ENCODE measurements at regions of chr22 and their contacts with region 1.

Region 1: GRCh38 chr22:42090596-42091454 is at the start of gene NDUFA6:
- DNase-seq: peak; percentile 93
- ATAC-seq: peak; percentile 88
- H3K4me3 Mint-ChIP-seq: peak within 1 kb of the TSS; percentile 97
- H3K27ac Mint-ChIP-seq: peak within 1 kb of the TSS; percentile 98
- H3K4me1 Mint-ChIP-seq: peaks cover 32% of the 10 kb centered on the region
- H3K27me3 Mint-ChIP-seq: no peaks in the 10 kb centered on the region
- CTCF ChIP-seq: peak; percentile 44
- total RNA-seq, gene NDUFA6: 73.6 and 83.2 TPM in 2 replicates

Region 2: GRCh38 chr22:41367039-41367679 is 723.7 kb before region 1 on chr22:
- CTCF ChIA-PET with region 1: no interaction called
- POLR2A ChIA-PET with region 1: no interaction called
- intact Hi-C with region 1: no loop called
- DNase-seq: no peak
- ATAC-seq: no peak
- H3K4me3 Mint-ChIP-seq: no peak overlapping the region
- H3K27ac Mint-ChIP-seq: no peak overlapping the region
- H3K4me1 Mint-ChIP-seq: no peaks in the 10 kb centered on the region
- H3K27me3 Mint-ChIP-seq: peaks cover 8% of the 10 kb centered on the region
- CTCF ChIP-seq: no peak

Region 3: DNA sequence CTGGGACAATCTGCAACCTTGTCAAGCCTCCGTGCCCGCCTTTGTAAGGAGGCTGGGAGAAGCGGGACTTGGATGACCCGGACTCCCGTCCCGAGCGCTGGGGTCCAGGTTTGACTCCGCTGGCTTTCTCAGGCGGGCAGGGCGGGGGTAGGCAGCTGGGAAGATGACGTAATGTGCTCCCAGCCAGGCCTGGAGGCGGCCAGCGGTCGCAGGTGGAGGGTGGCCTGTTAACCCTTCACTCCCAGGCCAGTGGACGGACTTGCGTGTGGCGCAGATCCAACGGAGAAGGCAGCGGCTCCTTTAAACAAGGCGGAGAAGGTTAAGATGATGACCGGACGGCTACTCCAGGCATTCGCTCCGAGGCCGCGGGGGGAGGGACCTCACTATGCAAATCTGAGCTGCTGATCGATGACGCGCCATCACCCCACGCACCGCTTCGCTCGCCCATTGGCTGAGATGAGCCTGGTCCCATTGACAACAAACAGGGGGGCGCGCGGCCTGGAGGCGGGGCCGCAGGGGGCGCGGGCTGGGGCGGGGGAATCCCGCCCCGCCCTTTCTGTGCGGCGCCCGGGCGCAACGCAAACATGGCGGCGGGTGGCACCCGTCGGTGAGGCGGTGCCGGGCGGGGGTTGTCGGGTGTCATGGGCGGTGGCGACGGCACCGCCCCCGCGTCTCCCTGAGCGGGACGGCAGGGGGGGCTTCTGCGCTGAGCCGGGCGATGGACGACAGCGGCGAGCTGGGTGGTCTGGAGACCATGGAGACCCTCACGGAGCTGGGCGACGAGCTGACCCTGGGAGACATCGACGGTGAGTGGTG is 258.1 kb before region 1 on chr22 and contains the start of gene SREBF2:
- CTCF ChIA-PET with region 1: no interaction called
- POLR2A ChIA-PET with region 1: interaction called, 18 read pairs
- intact Hi-C with region 1: loop called (anchors 1 kb)
- DNase-seq: peak; percentile 96
- ATAC-seq: peak; percentile 85
- H3K4me3 Mint-ChIP-seq: peak within 1 kb of the TSS; percentile 98
- H3K27ac Mint-ChIP-seq: peak within 1 kb of the TSS; percentile 99
- H3K4me1 Mint-ChIP-seq: peaks cover 62% of the 10 kb centered on the region
- H3K27me3 Mint-ChIP-seq: no peaks in the 10 kb centered on the region
- CTCF ChIP-seq: no peak
- total RNA-seq, gene SREBF2: 253 and 307 TPM in 2 replicates

Region 4: DNA sequence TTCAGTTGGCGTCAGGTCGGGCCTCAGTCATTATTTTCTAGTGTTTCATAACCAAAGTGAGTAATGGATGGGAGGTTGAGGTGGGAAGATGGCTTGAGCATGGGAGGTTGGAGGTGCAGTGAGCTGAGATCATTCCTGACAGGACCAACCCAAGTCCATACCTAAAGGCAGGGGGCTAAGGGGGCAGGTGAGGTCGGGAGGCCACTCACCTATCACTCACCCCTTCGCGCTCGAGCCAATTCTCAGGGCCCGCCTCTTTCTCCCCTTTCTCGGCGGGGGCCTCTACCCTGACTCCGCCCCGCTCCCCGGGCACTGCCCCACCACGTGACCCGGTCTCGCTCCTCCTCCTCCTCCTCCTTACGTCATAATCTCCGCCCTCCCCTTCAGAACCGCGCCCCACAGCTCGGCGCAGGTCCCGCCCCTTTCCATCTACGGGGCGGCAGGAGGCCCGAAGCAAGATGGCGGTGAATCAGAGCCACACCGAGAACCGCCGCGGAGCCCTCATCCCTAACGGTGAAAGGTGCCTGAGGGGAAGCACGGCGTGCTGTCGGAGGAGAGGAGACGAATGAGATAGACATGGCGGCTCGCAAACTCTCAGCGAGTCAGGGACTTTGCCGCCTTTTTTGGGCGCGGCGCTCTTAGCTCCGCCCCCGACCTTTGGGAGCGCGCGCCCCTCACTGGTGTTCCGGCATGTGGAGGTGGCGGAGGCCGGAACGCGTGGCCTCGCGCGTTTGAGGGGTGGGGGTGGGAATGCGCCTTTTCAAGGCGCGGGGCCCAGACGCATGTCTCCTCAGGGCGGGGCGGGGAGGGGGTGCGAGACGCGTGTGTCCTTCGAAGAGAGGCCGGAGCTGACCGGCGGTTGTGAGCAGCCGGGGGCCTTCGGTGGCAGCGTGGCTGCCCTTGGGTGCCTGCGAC is 92.2 kb before region 1 on chr22 and contains the start of gene WBP2NL:
- CTCF ChIA-PET with region 1: no interaction called
- POLR2A ChIA-PET with region 1: interaction called, 38 read pairs
- intact Hi-C with region 1: no loop called
- DNase-seq: peak; percentile 83
- ATAC-seq: peak; percentile 96
- H3K4me3 Mint-ChIP-seq: peak within 1 kb of the TSS; percentile 98
- H3K27ac Mint-ChIP-seq: peak within 1 kb of the TSS; percentile 98
- H3K4me1 Mint-ChIP-seq: peaks cover 22% of the 10 kb centered on the region
- H3K27me3 Mint-ChIP-seq: no peaks in the 10 kb centered on the region
- CTCF ChIP-seq: no peak
- total RNA-seq, gene WBP2NL: 6.8 and 7.8 TPM in 2 replicates

Region 5: GRCh38 chr22:42114721-42115120 is 23.9 kb after region 1 on chr22:
- CTCF ChIA-PET with region 1: interaction called, 18 read pairs
- POLR2A ChIA-PET with region 1: no interaction called
- intact Hi-C with region 1: no loop called
- DNase-seq: no peak
- ATAC-seq: no peak
- H3K4me3 Mint-ChIP-seq: no peak overlapping the region
- H3K27ac Mint-ChIP-seq: no peak overlapping the region
- H3K4me1 Mint-ChIP-seq: peaks cover 3% of the 10 kb centered on the region
- H3K27me3 Mint-ChIP-seq: no peaks in the 10 kb centered on the region
- CTCF ChIP-seq: no peak

Region 6: GRCh38 chr22:42437488-42438292 is 346.9 kb after region 1 on chr22:
- CTCF ChIA-PET with region 1: interaction called, 36 read pairs
- POLR2A ChIA-PET with region 1: interaction called, 24 read pairs
- intact Hi-C with region 1: loop called (anchors 1 kb)
- DNase-seq: peak; percentile 76
- ATAC-seq: peak; percentile 88
- H3K4me3 Mint-ChIP-seq: peak overlapping the region; percentile 81
- H3K27ac Mint-ChIP-seq: peak overlapping the region; percentile 46
- H3K4me1 Mint-ChIP-seq: peaks cover 37% of the 10 kb centered on the region
- H3K27me3 Mint-ChIP-seq: peaks cover 25% of the 10 kb centered on the region
- CTCF ChIP-seq: peak; percentile 59

Region 7: GRCh38 chr22:42614312-42615091 is 523.7 kb after region 1 on chr22 and contains the start of gene POLDIP3:
- CTCF ChIA-PET with region 1: no interaction called
- POLR2A ChIA-PET with region 1: interaction called, 7 read pairs
- intact Hi-C with region 1: loop called (anchors 5 kb)
- DNase-seq: peak; percentile 97
- ATAC-seq: peak; percentile 60
- H3K4me3 Mint-ChIP-seq: peak within 1 kb of the TSS; percentile 97
- H3K27ac Mint-ChIP-seq: peak within 1 kb of the TSS; percentile 100
- H3K4me1 Mint-ChIP-seq: peaks cover 56% of the 10 kb centered on the region
- H3K27me3 Mint-ChIP-seq: no peaks in the 10 kb centered on the region
- CTCF ChIP-seq: no peak
- total RNA-seq, gene POLDIP3: 77.1 and 77.5 TPM in 2 replicates

Measured in activated B cell treated with CpG ODN at 0.5 μM for 24 hours (primary cell).